ENCODE measurements at regions of chr2 and their contacts with region 1.

Region 1: GRCh38 chr2:143468341-143468888 is 339.2 kb downstream of the ARHGAP15 start:
- DNase-seq: no peak
- H3K4me3 Mint-ChIP-seq: peak overlapping the region; percentile 11
- H3K27ac Mint-ChIP-seq: peak overlapping the region; percentile 81
- H3K4me1 Mint-ChIP-seq: peaks cover 48% of the 10 kb centered on the region
- H3K27me3 Mint-ChIP-seq: no peaks in the 10 kb centered on the region

Region 2: DNA sequence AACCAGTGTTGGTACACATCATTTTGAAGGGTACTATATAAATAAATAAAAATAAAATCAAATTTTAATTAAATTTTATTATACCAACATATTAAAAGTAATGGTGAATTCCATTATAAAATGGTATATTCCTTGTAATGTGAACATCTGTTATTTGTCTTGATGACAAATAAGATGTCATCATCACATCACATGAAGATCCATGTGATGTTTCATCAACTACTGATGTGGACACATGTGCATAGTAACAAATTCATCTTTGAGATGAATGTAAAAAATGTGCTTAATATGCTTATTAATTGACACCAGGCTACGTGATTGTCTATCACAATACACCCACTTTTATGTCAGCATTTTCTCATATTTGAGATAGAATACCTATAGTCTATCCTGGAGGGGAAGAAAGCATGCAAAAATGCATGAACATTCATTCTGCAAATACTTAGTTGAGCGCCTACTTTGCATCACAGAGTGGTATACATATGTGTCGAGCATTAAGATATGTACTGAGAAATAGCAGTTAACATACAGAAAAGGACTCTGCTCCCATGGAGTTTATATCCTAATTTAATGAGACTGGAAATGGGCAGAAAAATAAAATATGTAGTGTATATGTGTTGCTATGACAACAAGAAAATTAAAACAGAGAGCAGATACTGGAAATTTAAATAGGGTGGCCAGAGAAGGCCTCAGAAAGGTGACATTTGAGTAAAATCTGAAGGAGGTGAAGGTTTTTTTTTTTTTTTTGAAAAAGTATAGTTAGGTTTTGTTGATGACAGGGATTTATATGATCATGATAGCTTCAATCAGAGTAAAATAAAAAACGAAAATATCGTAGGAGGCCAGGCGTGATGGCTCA is 58.1 kb before region 1 on chr2:
- intact Hi-C with region 1: loop called (anchors 1 kb)
- DNase-seq: no peak
- H3K4me3 Mint-ChIP-seq: no peak overlapping the region
- H3K27ac Mint-ChIP-seq: no peak overlapping the region
- H3K4me1 Mint-ChIP-seq: peaks cover 13% of the 10 kb centered on the region
- H3K27me3 Mint-ChIP-seq: no peaks in the 10 kb centered on the region

Region 3: DNA sequence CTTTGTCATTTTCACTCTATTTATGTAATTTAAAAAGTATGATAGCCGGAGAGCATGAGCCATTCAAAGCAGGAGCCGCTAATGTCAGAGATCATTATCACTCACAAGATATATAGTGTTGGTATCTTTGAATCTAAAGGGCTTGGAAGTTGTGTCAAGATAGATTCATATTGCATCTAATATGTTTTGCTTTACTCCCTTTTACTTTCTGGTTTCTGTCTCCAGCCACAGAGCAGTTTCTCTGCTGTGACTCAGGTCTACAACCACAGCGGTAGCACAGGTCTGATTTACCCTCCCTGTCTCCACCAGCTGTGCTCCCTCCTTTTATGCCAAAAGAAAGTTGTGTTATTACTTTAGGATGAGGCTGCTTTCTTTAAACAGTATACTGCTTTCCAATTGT is 84.8 kb after region 1 on chr2:
- intact Hi-C with region 1: loop called (anchors 1 kb)
- DNase-seq: no peak
- H3K4me3 Mint-ChIP-seq: no peak overlapping the region
- H3K27ac Mint-ChIP-seq: no peak overlapping the region
- H3K4me1 Mint-ChIP-seq: peaks cover 13% of the 10 kb centered on the region
- H3K27me3 Mint-ChIP-seq: no peaks in the 10 kb centered on the region

Region 4: DNA sequence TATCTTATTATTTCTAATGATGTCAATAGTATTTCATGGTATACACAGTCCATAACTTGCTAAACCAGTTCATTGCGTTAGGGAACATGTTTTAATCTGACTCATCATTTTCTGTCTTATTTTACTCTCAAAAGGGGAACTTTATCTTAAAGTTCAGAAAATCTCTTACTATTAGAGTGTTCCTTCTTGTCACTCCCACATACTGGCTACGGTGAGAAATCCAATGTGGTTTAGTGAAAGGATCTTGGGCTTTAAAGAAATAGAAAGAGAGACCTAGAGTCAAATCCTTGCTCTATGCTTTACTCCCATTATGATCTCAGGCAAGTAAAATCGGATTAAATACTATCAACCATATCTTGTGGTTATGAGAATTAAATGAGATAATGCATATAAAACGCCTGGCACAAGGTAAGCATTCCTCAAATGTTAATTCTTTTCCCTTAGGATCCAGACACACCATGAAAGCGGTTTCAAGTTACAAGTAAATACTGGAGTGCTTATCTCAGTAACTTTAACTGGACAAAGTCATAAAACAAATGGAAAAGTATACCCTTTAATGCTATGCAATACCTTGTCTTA is 236.8 kb after region 1 on chr2:
- intact Hi-C with region 1: loop called (anchors 1 kb)
- DNase-seq: no peak
- H3K4me3 Mint-ChIP-seq: no peak overlapping the region
- H3K27ac Mint-ChIP-seq: peak overlapping the region; percentile 59
- H3K4me1 Mint-ChIP-seq: peaks cover 29% of the 10 kb centered on the region
- H3K27me3 Mint-ChIP-seq: no peaks in the 10 kb centered on the region

Region 5: DNA sequence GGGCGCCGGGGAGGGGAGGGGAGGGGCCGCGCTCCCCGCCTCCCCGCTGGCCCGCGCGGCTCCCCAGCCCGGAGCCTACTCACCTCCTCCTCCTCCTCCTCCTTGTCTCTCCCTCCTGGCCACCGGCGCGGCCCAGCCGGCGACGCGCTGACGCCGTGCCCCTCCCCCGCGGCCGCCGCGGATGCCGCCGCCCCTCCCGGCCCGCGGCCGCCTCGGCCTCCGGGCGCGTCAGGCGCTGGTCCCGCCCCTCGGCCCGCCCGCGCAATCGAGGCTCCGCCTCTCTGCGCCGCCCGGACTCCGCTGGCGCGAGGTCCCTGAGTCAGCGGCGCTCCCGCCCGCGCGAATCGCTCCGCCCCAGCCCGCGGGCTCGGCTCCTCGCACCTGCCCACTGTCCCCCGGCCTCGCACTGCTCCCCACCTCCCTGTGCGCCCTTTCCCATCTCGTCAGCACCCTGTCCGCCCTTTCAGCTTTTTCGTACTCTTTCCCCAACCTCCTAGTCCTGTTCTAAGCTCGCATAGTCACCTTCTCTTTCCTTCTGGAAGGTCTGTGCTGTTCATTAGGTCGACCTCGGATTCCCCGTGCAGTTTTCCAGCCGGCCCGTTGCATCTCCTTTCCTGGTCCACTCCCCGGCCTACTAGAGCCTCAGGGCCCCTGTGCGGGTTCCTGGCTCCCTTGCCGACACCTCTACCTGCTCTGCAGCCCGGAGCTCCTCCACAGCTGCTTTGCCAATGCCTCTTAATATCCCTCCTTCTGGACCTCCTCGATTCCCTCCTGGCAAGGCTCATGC is 864.1 kb after region 1 on chr2:
- intact Hi-C with region 1: loop called (anchors 5 kb)
- DNase-seq: peak; percentile 91
- H3K4me3 Mint-ChIP-seq: peak overlapping the region; percentile 85
- H3K27ac Mint-ChIP-seq: peak overlapping the region; percentile 98
- H3K4me1 Mint-ChIP-seq: peaks cover 48% of the 10 kb centered on the region
- H3K27me3 Mint-ChIP-seq: no peaks in the 10 kb centered on the region